Naive thymus-derived CD8-positive, alpha-beta T cell (primary cell): ENCODE measurements at regions of chr10 and their contacts with region 1.

Region 1: DNA sequence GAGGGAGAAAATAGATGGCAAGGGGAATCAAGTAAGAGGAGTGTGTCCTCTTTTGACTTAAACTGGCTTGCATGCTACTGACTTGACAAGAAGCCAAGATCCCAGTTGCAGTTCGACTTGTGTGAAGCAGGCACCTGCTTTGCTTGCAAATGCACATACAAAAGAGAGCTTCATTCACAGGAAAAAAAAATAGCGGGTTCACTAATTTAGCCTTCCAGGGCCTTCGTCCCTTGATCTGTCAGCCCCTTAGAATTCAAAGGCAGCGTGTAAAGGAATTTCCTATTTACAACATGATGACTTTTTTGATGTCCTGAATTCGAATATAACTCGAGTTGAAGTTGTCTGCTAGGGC is 192.1 kb downstream of the CELF2 start:
- DNase-seq: peak in 3 of 10 donors; percentile 9 to 35 (median 25)
- ATAC-seq: peak; percentile 29
- H3K4me3 Mint-ChIP-seq: peak overlapping the region; percentile 70 to 86 (median 78)
- H3K27ac Mint-ChIP-seq: peak overlapping the region in 9 of 10 donors; percentile 76 to 94 (median 88)
- H3K4me1 Mint-ChIP-seq: peaks cover 59 to 100% (median 98%) of the 10 kb centered on the region in 4 donors
- H3K27me3 Mint-ChIP-seq: no peaks in the 10 kb centered on the region

Region 2: DNA sequence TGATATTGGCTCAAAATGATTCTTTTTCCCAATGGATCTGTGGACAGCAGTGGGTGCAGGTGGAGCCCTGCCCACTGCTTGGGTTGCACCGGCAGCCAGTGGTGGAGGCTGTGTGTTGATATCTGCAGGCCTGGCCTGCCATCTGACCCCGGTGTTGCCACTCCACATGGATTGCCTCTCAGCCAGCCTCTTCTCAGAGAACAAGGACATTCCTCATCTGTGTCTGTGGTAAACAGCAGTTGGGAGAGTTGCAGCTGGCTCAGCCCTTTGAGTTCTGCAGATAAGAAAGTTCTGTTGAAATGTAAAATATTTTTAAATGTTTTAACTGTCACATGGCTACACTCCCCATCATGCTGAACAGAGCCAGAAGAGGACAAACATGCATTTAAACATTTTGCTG is 567.1 kb before region 1 on chr10:
- POLR2A ChIA-PET with region 1: no interaction called
- DNase-seq: no peak
- ATAC-seq: no peak
- H3K4me3 Mint-ChIP-seq: no peak overlapping the region
- H3K27ac Mint-ChIP-seq: no peak overlapping the region
- H3K4me1 Mint-ChIP-seq: no peaks in the 10 kb centered on the region
- H3K27me3 Mint-ChIP-seq: peaks cover 9 to 35% (median 14%) of the 10 kb centered on the region in 5 donors

Region 3: GRCh38 chr10:11145495-11145855 is 64.3 kb before region 1 on chr10:
- POLR2A ChIA-PET with region 1: interaction called, 10 read pairs
- DNase-seq: peak; percentile 38 to 84 (median 70)
- ATAC-seq: peak; percentile 60 to 61
- H3K4me3 Mint-ChIP-seq: peak overlapping the region; percentile 67 to 87 (median 78)
- H3K27ac Mint-ChIP-seq: peak overlapping the region in 9 of 10 donors; percentile 96 to 100 (median 98)
- H3K4me1 Mint-ChIP-seq: peaks cover 55 to 97% (median 96%) of the 10 kb centered on the region in 4 donors
- H3K27me3 Mint-ChIP-seq: no peaks in the 10 kb centered on the region

Region 4: DNA sequence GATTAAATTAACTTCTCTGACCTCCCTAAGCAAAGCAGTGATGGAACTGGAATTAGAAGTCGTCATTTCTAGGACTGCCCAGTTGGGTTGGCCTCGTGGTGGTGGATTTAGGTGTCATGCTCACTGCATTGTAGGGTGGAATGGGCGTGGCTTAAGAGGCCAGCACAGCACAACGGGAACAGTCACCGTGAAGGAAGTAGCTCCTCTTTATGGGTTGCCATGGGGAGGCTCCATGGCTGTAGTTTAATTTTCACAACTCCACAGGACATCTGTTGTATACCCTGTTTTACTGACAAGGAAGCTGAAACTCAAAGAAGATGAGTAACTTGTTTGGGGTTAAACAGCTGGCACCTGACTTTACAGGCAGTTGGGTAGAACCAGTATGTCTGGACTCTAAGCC is 16.1 kb after region 1 on chr10:
- POLR2A ChIA-PET with region 1: interaction called, 28 read pairs
- DNase-seq: peak in 8 of 10 donors; percentile 22 to 70 (median 32)
- ATAC-seq: peak; percentile 51
- H3K4me3 Mint-ChIP-seq: peak overlapping the region; percentile 31 to 82 (median 68)
- H3K27ac Mint-ChIP-seq: peak overlapping the region in 9 of 10 donors; percentile 80 to 96 (median 90)
- H3K4me1 Mint-ChIP-seq: peaks cover 57 to 99% (median 85%) of the 10 kb centered on the region in 4 donors
- H3K27me3 Mint-ChIP-seq: peaks cover 0 to 2% (median 0%) of the 10 kb centered on the region in 5 donors